Mammary epithelial cell (primary cell): ENCODE measurements at regions of chr9 and their contacts with region 1.

Region 1: GRCh38 chr9:130682490-130683121 is 11.0 kb upstream of the EXOSC2 start:
- DNase-seq: peak; percentile 58
- H3K4me3 ChIP-seq: peak overlapping the region; percentile 38 to 69 (median 44)
- H3K27ac ChIP-seq: no peak overlapping the region
- H3K4me1 ChIP-seq: peaks cover 17% of the 10 kb centered on the region
- H3K27me3 ChIP-seq: no peaks in the 10 kb centered on the region
- CTCF ChIP-seq: peak; percentile 71 to 83

Region 2: GRCh38 chr9:130243015-130243734 is 439.4 kb before region 1 on chr9:
- CTCF ChIA-PET with region 1: interaction called, 3 read pairs
- dilution Hi-C with region 1: no loop called
- in situ Hi-C with region 1: no loop called
- intact Hi-C with region 1: loop called (anchors 10 kb)
- DNase-seq: no peak
- H3K4me3 ChIP-seq: no peak overlapping the region
- H3K27ac ChIP-seq: no peak overlapping the region
- H3K4me1 ChIP-seq: no peaks in the 10 kb centered on the region
- H3K27me3 ChIP-seq: no peaks in the 10 kb centered on the region
- CTCF ChIP-seq: peak; percentile 87 to 90

Region 3: GRCh38 chr9:130327070-130327780 is 355.4 kb before region 1 on chr9:
- CTCF ChIA-PET with region 1: interaction called, 3 read pairs
- dilution Hi-C with region 1: no loop called
- in situ Hi-C with region 1: no loop called
- intact Hi-C with region 1: loop called (anchors 10 kb)
- DNase-seq: no peak
- H3K4me3 ChIP-seq: no peak overlapping the region
- H3K27ac ChIP-seq: no peak overlapping the region
- H3K4me1 ChIP-seq: peaks cover 12% of the 10 kb centered on the region
- H3K27me3 ChIP-seq: peaks cover 4% of the 10 kb centered on the region
- CTCF ChIP-seq: peak in 1 of 2 donors; percentile 8

Region 4: DNA sequence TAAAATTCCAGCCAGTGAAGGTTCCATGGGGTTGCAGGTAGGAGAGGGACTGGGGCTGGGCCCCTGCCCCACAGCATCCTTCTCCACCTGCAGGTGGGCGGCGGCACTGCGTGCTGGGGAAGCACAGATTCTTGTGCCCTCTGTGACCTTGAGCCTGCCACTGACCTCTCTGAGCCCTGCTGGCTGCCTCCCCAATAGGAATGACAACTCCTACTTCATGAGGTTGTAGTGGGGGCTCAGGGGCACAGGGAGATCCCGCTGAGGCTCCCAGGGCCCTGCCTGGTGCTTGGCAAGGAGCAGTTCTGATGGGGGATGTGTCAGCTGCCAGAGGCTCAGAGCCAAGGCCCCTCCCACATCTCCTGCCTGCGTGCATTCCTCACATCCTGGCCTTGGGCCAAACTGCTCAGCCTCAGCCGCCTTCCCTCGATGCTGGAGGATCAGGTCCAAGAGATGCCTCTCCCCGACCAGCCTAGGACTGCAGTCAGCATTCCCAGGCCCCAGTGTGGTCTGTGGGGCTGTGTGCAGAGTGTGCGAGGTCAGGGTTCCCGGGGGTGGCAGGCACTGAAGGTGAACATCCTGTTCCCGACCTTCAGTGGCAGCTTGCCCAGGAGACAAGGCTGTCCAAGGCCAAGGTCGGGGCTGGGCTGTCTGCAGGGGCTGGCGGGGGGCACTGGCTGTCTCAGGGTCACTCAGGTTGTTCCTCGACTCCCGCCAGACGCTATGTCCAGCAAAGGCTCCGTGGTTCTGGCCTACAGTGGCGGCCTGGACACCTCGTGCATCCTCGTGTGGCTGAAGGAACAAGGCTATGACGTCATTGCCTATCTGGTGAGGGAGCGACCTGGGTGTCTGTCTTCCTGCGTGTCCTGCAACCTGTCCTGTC is 230.9 kb before region 1 on chr9:
- CTCF ChIA-PET with region 1: no interaction called
- dilution Hi-C with region 1: no loop called
- in situ Hi-C with region 1: loop called (anchors 5 to 10 kb)
- intact Hi-C with region 1: no loop called
- DNase-seq: peak; percentile 84
- H3K4me3 ChIP-seq: no peak overlapping the region
- H3K27ac ChIP-seq: no peak overlapping the region
- H3K4me1 ChIP-seq: peaks cover 28% of the 10 kb centered on the region
- H3K27me3 ChIP-seq: no peaks in the 10 kb centered on the region
- CTCF ChIP-seq: peak; percentile 62 to 68

Region 5: GRCh38 chr9:130461218-130461630 is 221.4 kb before region 1 on chr9:
- CTCF ChIA-PET with region 1: interaction called, 4 read pairs
- dilution Hi-C with region 1: loop called (anchors 5 kb)
- in situ Hi-C with region 1: loop called in 1 of 2 experiments (anchors 10 kb)
- intact Hi-C with region 1: loop called (anchors 1 kb)
- DNase-seq: peak; percentile 16
- H3K4me3 ChIP-seq: no peak overlapping the region
- H3K27ac ChIP-seq: no peak overlapping the region
- H3K4me1 ChIP-seq: no peaks in the 10 kb centered on the region
- H3K27me3 ChIP-seq: no peaks in the 10 kb centered on the region
- CTCF ChIP-seq: peak; percentile 53 to 81

Region 6: GRCh38 chr9:130578865-130579737 is 103.5 kb before region 1 on chr9 and contains the start of gene FUBP3:
- CTCF ChIA-PET with region 1: no interaction called
- dilution Hi-C with region 1: loop called (anchors 5 kb)
- in situ Hi-C with region 1: no loop called
- intact Hi-C with region 1: loop called (anchors 5 kb)
- DNase-seq: peak; percentile 87
- H3K4me3 ChIP-seq: peak within 1 kb of the TSS; percentile 94 to 98 (median 95)
- H3K27ac ChIP-seq: peak within 1 kb of the TSS; percentile 83
- H3K4me1 ChIP-seq: peaks cover 15% of the 10 kb centered on the region
- H3K27me3 ChIP-seq: no peaks in the 10 kb centered on the region
- CTCF ChIP-seq: no peak
- total RNA-seq, gene FUBP3: 42.8 to 62.5 TPM